Panc1 (cell line): ENCODE measurements at regions of chr15 and their contacts with region 1.

Region 1: DNA sequence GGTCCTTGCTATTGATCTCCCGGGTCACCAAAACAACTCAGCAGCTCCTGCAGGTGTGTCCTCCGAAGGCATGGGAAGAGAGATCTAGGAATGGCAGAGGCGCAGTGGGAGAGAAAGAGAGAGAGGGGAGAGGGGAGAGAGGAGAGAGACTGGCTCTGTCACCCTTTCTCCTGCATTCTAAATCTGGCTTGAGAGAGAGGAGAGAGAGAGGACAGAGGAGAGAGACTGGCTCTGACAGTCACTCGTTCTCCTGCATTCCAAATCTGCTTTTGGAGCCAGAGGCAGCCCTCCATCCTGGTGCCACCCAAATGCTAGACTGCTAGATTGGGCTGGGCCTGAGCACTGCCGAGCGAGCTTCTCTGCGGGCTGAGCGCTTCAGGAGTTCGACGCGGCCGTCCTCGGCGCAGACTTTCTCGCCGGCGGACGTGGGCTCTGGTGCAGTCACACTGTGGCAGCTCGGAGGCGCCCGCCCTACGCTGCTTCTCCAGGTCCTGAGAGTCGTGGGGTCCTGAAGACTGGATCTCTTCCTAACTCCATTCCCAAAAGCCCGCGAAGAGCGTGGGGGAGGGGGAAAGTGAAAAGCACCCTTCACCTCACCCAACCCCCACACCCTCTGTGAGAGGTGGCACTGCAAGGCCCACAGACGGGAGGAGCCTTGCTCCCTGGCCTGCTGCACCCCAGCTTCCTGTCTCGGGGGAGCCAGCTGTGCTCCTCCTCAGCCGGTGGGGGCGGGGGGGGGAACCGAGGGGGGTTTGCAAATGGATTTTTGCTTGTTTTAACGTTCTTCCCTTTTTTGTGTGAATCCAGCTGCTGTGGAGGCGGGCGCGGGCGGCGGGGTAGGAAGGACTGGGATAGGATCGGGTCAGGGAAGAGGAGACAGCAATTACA is 222.3 kb downstream of the MEIS2 start:
- DNase-seq: no peak
- ATAC-seq: no peak
- H3K4me3 ChIP-seq: no peak overlapping the region
- H3K27ac ChIP-seq: no peak overlapping the region
- H3K4me1 ChIP-seq: peaks cover 5% of the 10 kb centered on the region; the same call in 1 of the 2 replicates
- H3K27me3 ChIP-seq: peaks cover 26% of the 10 kb centered on the region
- CTCF ChIP-seq: no peak

Region 2: DNA sequence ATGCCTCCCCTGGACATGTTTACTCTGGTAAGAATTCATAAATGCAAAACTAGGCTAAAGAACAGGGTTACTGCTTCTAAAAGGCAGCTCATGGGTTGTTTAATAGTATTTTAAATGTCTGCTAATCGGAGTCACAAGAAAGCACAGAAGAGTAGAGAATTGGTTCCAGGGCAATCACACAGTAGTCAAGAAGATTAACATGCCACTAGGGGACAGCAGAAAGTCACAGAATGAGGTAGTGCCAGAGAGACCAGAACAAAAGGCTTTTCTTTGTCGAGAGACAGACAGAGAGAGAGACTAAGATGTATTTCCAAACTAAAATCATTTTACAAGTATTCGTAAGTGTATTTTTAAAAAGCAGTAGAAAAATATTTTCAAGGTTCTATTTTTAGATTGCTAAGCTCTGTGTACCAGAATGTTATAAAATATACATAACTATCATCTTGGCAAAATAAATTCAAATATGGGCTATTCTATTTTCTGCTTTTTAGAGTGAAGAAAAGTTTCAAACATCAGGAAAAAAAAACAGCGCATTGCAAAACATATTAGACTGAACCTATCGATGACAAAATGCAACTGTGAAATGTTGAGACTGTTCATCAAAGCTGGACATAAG is 376.9 kb before region 1 on chr15:
- CTCF ChIA-PET with region 1: no interaction called
- POLR2A ChIA-PET with region 1: no interaction called
- in situ Hi-C with region 1: no loop called
- intact Hi-C with region 1: loop called (anchors 5 kb)
- DNase-seq: peak; percentile 59
- ATAC-seq: peak; percentile 99
- H3K4me3 ChIP-seq: no peak overlapping the region
- H3K27ac ChIP-seq: no peak overlapping the region
- H3K4me1 ChIP-seq: peaks cover 11% of the 10 kb centered on the region
- H3K27me3 ChIP-seq: no peaks in the 10 kb centered on the region
- CTCF ChIP-seq: peak; percentile 87; the same call in 1 of the 2 replicates

Region 3: GRCh38 chr15:37204692-37205091 is 326.7 kb after region 1 on chr15:
- CTCF ChIA-PET with region 1: no interaction called
- POLR2A ChIA-PET with region 1: no interaction called
- in situ Hi-C with region 1: no loop called
- intact Hi-C with region 1: no loop called
- DNase-seq: no peak
- ATAC-seq: no peak
- H3K4me3 ChIP-seq: no peak overlapping the region
- H3K27ac ChIP-seq: no peak overlapping the region
- H3K4me1 ChIP-seq: no peaks in the 10 kb centered on the region
- H3K27me3 ChIP-seq: no peaks in the 10 kb centered on the region
- CTCF ChIP-seq: peak; percentile 21; the same call in 1 of the 2 replicates